GM12878 (cell line): ENCODE measurements at regions of chr11 and their contacts with region 1.

Region 1: DNA sequence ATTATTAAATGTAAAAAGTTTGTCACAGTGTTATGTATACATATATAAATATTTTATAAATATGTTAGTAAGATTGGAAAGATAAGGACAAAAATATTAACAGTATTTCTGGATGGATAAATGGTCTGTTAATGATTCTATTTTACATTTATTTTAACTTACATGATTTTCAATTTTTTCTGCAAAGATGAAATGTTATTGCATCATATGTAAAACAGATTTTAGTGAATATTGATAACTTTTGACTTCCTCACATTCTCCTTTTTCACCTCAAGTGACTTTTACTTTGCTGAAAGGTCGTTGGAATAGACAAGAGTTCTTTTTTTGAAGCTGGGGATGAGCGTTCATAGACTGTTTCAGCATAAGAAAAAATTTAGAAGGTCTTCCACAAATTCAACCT is 1554.7 kb upstream of the TENM4 start:
- DNase-seq: no peak
- ATAC-seq: no peak
- H3K4me3 ChIP-seq: no peak overlapping the region
- H3K27ac ChIP-seq: no peak overlapping the region
- H3K4me1 ChIP-seq: no peaks in the 10 kb centered on the region
- H3K27me3 ChIP-seq: no peaks in the 10 kb centered on the region
- CTCF ChIP-seq: no peak
- EP300 ChIP-seq: no peak
- POLR2A ChIP-seq: no peak
- RAD21 ChIP-seq: no peak

Region 2: GRCh38 chr11:80649186-80649585 is 346.3 kb before region 1 on chr11:
- CTCF ChIA-PET with region 1: no interaction called
- POLR2A ChIA-PET with region 1: no interaction called
- RAD21 ChIA-PET with region 1: no interaction called
- SMC1A ChIA-PET with region 1: no interaction called
- in situ Hi-C with region 1: no loop called
- intact Hi-C with region 1: loop called (anchors 5 kb)
- DNase-seq: no peak
- ATAC-seq: no peak
- H3K4me3 ChIP-seq: no peak overlapping the region
- H3K27ac ChIP-seq: no peak overlapping the region
- H3K4me1 ChIP-seq: no peaks in the 10 kb centered on the region
- H3K27me3 ChIP-seq: no peaks in the 10 kb centered on the region
- CTCF ChIP-seq: no peak
- EP300 ChIP-seq: no peak
- POLR2A ChIP-seq: no peak
- RAD21 ChIP-seq: no peak